Activated naive CD4-positive, alpha-beta T cell treated with anti-CD3 and anti-CD28 coated beads, Interleukin-2, amount 10 ng/mL, durations not matched to agents 7 days and 5 days (primary cell): ENCODE measurements at regions of chr16 and their contacts with region 1.

Region 1: DNA sequence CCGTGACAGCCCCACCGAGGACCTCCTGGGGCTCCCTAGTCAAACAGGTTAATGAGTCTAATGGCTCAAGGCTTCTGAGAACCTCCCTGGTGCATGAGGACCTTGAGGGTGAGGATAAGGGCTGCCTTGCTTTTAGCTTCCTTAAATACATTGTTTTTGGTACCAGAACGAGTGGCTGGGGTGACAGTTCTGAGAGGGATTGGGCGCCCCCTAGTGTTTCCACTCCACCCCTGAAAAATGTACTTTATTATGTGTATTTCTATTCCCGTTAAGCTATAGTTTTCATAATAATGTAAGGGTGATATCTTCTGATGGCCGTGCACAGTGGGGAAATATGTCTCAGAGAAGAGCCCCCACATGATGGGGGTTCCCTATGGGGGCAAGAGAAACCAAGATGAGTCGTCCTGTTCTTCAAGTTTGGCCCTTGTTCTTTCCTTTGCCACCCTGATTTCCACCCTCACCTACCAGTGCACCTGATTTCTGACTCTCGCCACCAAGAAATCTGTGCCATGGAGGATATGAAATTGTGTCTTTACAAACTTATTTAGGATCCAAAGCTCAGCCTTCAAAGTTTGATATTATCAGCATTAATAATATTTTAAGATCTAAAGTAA is 14.5 kb upstream of the VWA3A start:
- DNase-seq: peak; percentile 82
- H3K4me3 Mint-ChIP-seq: no peak overlapping the region
- H3K27ac Mint-ChIP-seq: no peak overlapping the region
- H3K4me1 Mint-ChIP-seq: no peaks in the 10 kb centered on the region
- H3K27me3 Mint-ChIP-seq: no peaks in the 10 kb centered on the region

Region 2: DNA sequence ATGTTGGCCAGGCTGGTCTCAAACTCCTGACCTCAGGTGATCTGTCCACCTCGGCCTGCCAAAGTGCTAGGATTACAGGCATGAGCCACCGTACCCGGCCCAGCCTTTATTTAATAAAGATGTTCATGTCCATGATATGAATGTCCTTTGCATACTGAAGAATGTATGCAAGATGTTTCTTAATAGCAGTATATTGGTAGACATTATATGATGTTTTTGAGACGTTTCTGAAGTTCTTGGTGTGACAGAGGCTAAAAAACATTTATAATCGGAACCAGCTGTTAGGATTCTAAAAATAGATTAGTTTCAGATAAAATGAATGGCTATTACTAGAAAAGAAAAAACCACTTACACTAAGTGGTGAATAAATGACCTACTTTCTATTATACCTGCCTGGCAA is 88.7 kb before region 1 on chr16:
- CTCF ChIA-PET with region 1: interaction called, 15 read pairs
- DNase-seq: no peak
- H3K4me3 Mint-ChIP-seq: no peak overlapping the region
- H3K27ac Mint-ChIP-seq: no peak overlapping the region
- H3K4me1 Mint-ChIP-seq: peaks cover 8% of the 10 kb centered on the region
- H3K27me3 Mint-ChIP-seq: no peaks in the 10 kb centered on the region

Region 3: DNA sequence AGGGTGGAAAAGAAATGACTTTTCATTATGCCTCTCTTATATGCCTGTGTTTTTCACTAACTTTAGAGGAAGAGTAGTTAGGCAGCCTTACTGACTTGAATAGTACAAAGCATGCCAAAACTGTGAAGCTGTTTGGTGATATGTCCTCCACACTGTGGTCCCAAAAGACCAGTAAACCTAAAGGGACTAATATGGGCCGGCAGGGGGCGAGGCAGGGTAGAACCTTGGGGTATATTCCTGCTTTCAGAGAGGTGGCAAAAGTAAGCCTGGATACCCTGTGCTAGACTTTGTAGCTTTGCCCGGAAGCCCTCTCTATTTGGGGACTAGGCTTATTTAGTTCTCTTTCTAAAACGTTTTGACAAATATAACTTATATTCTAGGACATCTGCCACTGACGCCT is 21.9 kb before region 1 on chr16:
- CTCF ChIA-PET with region 1: interaction called, 17 read pairs
- DNase-seq: no peak
- H3K4me3 Mint-ChIP-seq: no peak overlapping the region
- H3K27ac Mint-ChIP-seq: no peak overlapping the region
- H3K4me1 Mint-ChIP-seq: peaks cover 19% of the 10 kb centered on the region
- H3K27me3 Mint-ChIP-seq: no peaks in the 10 kb centered on the region

Region 4: GRCh38 chr16:22091758-22092600 is 14.2 kb after region 1 on chr16 and contains the start of gene VWA3A:
- CTCF ChIA-PET with region 1: interaction called, 15 read pairs
- DNase-seq: no peak
- H3K4me3 Mint-ChIP-seq: no peak within 1 kb of the TSS
- H3K27ac Mint-ChIP-seq: peak within 1 kb of the TSS; percentile 0
- H3K4me1 Mint-ChIP-seq: no peaks in the 10 kb centered on the region
- H3K27me3 Mint-ChIP-seq: peaks cover 25% of the 10 kb centered on the region